CD4-positive, alpha-beta T cell (primary cell): ENCODE measurements at regions of chr10 and their contacts with region 1.

Region 1: DNA sequence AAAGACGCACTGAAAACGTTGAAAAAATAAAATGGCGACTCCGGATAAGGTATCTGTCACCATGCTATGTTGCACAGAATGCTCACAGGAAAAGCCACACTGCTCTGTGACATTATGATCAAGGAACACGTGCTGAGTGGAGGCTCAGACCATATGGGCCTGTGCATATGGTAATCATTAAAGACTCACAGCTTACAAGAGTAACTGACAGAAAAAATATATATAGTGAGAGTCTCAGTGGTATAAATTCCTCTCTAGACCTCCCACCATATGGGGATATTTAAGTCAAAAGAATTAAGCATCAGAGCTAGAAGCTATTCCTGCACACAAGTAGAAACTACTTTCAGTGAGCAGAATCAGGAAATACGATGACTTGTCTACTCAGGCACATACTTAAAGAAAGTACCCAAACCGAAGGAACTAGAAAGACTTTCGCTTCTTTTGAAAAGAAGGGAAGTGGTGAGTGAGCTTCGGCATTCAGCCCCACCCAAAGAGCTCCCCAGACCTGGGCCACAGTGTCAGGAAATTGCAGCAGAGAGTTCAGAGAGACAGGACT is 65.1 kb upstream of the MPP7 start:
- DNase-seq: peak; percentile 22 to 92 (median 56)
- ATAC-seq: peak; percentile 92
- H3K4me3 ChIP-seq: peak overlapping the region; percentile 6
- H3K4me3 Mint-ChIP-seq: peak overlapping the region; percentile 80
- H3K27ac ChIP-seq: peak overlapping the region; percentile 69 to 79
- H3K27ac Mint-ChIP-seq: peak overlapping the region; percentile 91
- H3K4me1 ChIP-seq: peaks cover 59% of the 10 kb centered on the region
- H3K4me1 Mint-ChIP-seq: peaks cover 58% of the 10 kb centered on the region
- H3K27me3 ChIP-seq: no peaks in the 10 kb centered on the region
- H3K27me3 Mint-ChIP-seq: no peaks in the 10 kb centered on the region
- CTCF ChIP-seq: no peak

Region 2: DNA sequence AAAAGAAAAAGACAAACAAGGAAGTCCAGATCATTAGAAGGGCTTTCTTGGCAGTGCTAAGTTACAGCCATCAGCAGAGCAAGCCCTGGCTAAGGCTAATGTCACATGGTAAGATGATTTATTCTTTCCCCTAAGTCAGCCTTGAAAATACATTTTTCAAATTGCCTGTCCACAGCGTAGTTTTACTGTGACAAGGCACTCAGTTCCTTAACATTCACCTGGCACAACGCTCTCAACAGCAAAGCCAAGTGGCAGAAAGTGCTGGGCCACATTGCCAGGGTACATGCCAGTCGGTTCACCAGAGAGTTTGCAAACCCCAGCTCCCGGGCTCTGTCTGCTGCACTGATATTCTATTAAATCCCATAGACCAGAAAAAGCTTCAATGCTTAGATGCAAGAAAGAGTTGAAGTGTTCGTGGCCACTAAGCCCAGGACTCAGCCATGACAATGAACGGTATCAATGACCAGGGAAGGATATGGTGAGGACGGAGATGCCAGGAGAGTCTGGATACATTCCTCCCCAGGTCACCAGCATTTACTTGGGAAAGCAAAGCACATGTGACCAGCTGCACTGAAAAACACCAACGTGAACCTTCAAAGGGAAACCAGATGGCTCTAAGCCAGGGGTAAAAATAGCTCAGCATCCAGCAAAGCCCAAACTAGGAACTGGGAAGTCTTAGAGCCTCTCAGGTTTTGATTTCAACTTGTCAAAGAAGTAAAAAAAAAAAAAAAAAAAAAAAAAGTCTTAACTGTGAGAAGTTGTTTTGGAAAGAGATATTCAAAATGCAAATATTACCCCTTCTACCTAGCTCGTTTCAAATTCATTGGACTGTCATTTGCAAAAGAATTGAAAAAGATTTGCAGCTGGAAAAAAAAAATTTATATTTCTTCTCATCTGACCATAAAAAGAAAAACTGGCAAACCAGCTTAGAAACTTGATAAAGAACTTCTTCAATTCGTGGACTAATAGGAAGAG is 41.2 kb before region 1 on chr10:
- CTCF ChIA-PET with region 1: interaction called, 9 read pairs
- POLR2A ChIA-PET with region 1: interaction called, 258 read pairs
- intact Hi-C with region 1: no loop called
- DNase-seq: no peak
- ATAC-seq: no peak
- H3K4me3 ChIP-seq: no peak overlapping the region
- H3K4me3 Mint-ChIP-seq: no peak overlapping the region
- H3K27ac ChIP-seq: no peak overlapping the region
- H3K27ac Mint-ChIP-seq: no peak overlapping the region
- H3K4me1 ChIP-seq: peaks cover 39% of the 10 kb centered on the region
- H3K4me1 Mint-ChIP-seq: peaks cover 67% of the 10 kb centered on the region
- H3K27me3 ChIP-seq: no peaks in the 10 kb centered on the region
- H3K27me3 Mint-ChIP-seq: no peaks in the 10 kb centered on the region
- CTCF ChIP-seq: no peak

Region 3: DNA sequence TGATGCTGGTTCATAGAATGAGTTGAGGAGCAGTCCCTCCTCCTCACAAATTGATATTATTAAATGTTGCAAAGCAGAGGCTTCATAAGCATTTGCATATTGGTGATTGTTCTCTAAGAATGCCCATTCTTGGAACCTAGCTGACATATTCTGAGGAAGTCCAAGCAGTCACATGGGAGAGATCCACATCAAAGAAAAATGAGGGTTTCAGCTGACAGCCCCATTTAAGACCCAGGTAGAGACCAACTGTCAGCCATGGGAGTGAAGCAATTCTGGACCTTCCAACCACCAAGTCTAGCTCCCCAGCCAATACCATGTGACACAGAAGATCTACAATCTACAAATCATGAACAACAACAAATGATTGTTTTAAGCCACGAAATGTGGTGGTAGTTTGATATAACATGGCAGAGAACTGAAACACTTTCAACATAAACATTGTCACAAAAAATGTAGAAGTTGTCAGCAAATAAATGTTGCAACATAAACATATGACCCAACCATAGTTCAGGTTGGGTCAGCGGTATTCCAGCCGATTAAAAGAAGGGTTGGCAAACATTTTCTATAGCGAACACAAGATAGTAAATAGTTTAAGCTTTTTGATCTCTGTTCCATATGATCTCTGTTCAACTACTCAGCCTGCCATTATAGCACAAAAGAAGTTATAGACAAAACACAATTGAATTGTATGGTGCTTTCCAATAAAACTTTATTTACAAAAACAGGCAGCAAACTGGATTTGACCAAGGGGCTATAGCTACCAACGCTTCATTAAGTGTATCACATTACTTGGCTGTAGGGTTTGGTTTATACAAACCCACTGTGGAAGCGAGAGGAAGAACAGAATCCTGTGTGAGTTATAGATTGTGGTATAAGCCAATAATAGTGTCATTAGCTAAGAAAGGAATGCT is 23.8 kb before region 1 on chr10:
- CTCF ChIA-PET with region 1: no interaction called
- POLR2A ChIA-PET with region 1: interaction called, 7 read pairs
- intact Hi-C with region 1: loop called in 1 of 2 experiments (anchors 2 kb)
- DNase-seq: no peak
- ATAC-seq: no peak
- H3K4me3 ChIP-seq: no peak overlapping the region
- H3K4me3 Mint-ChIP-seq: no peak overlapping the region
- H3K27ac ChIP-seq: no peak overlapping the region
- H3K27ac Mint-ChIP-seq: no peak overlapping the region
- H3K4me1 ChIP-seq: peaks cover 1% of the 10 kb centered on the region
- H3K4me1 Mint-ChIP-seq: peaks cover 6% of the 10 kb centered on the region
- H3K27me3 ChIP-seq: no peaks in the 10 kb centered on the region
- H3K27me3 Mint-ChIP-seq: no peaks in the 10 kb centered on the region
- CTCF ChIP-seq: no peak